Heart right ventricle (tissue), 16 donors: ENCODE measurements at regions of chr6 and their contacts with region 1.

Region 1: DNA sequence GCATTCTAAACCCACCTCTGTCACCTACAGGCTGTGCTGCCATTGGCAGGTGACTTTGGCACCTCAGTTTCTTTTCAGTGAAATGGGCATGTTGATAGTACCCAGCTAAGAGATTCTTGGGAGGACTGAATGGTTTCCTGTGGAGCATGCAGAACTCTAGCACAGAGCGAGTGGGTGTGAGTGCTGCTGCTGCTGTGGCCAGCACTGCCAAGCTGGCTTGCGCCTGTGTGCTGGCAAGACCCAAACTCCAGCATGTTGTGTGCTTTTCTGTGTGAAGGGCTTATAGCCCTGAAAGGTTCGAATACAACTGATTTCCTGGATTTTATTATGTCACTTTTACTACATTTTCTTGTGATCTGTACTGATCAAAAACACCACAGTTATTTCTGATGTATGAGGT is 78.1 kb upstream of the KIF25 start:
- DNase-seq: no peak
- ATAC-seq: no peak
- H3K4me3 ChIP-seq: no peak overlapping the region
- H3K27ac ChIP-seq: no peak overlapping the region
- H3K4me1 ChIP-seq: no peaks in the 10 kb centered on the region
- H3K27me3 ChIP-seq: no peaks in the 10 kb centered on the region
- CTCF ChIP-seq: no peak

Region 2: DNA sequence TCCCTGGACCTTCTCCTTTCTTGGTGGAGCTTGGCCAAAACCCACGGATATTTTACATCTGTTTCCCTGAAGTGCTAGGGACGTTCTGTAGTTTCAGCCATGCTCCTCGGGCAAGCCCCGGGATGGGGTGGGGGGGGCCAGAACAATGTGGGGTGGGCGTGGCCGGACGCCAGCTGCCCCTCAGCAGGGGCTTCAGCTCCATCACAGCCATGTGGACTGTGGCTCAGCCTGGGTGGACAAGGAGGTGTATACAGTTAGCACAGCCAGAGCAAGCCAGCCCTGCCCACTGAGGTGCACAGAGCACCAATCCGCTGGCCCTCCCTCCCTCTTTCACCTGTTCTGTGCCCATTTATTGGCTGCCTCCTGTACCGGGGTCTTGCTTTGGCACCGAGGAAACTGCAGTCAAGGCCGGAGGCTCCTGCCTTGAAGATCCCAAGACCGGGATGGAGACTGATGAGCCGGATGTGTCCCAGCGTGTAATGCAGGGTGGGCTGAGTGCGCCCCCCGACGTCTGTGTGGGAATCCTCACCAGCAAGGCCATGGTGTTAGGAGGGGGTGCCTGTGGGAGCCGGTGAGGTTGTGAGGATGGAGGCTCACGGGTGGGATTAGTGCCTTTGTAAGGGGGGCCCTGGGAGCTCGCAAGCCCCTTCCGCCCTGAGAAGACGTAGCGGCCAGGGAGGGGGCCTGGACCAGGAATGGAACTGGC is 131.7 kb after region 1 on chr6:
- intact Hi-C with region 1: loop called in 2 of 10 experiments (anchors 10 kb)
- DNase-seq: no peak
- ATAC-seq: no peak
- H3K4me3 ChIP-seq: no peak overlapping the region
- H3K27ac ChIP-seq: no peak overlapping the region
- H3K4me1 ChIP-seq: peaks cover 22 to 37% (median 34%) of the 10 kb centered on the region in 9 donors
- H3K27me3 ChIP-seq: no peaks in the 10 kb centered on the region
- CTCF ChIP-seq: peak in 1 of 9 donors; percentile 38

Region 3: DNA sequence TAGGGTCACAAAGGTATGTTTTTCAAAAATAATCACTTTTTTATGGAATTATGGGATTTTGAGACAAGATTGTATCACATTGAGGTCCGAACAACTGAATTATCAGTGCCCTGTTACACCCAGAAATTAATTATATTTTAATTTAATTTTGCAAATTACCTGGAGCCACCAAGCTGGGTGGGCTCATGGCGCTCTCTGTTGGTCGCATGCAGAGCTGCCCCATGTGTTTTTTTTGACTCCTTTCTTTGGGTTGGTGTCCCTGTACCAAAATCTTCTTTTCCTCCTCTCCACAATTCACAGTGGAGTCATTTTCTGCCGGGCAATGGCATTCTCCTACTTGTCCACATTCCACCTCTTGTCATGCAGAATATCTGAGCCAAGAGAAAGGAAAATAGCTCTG is 198.6 kb after region 1 on chr6:
- intact Hi-C with region 1: loop called in 1 of 10 experiments (anchors 10 kb)
- DNase-seq: no peak
- ATAC-seq: no peak
- H3K4me3 ChIP-seq: no peak overlapping the region
- H3K27ac ChIP-seq: no peak overlapping the region
- H3K4me1 ChIP-seq: peaks cover 0 to 5% (median 0%) of the 10 kb centered on the region in 9 donors
- H3K27me3 ChIP-seq: no peaks in the 10 kb centered on the region
- CTCF ChIP-seq: peak; percentile 42 to 71 (median 66)

Region 4: GRCh38 chr6:168342641-168343040 is 423.3 kb after region 1 on chr6:
- intact Hi-C with region 1: loop called in 1 of 10 experiments (anchors 10 kb)
- DNase-seq: no peak
- ATAC-seq: no peak
- H3K4me3 ChIP-seq: no peak overlapping the region
- H3K27ac ChIP-seq: no peak overlapping the region
- H3K4me1 ChIP-seq: no peaks in the 10 kb centered on the region
- H3K27me3 ChIP-seq: peaks cover 0 to 54% (median 37%) of the 10 kb centered on the region in 7 donors
- CTCF ChIP-seq: no peak

Region 5: DNA sequence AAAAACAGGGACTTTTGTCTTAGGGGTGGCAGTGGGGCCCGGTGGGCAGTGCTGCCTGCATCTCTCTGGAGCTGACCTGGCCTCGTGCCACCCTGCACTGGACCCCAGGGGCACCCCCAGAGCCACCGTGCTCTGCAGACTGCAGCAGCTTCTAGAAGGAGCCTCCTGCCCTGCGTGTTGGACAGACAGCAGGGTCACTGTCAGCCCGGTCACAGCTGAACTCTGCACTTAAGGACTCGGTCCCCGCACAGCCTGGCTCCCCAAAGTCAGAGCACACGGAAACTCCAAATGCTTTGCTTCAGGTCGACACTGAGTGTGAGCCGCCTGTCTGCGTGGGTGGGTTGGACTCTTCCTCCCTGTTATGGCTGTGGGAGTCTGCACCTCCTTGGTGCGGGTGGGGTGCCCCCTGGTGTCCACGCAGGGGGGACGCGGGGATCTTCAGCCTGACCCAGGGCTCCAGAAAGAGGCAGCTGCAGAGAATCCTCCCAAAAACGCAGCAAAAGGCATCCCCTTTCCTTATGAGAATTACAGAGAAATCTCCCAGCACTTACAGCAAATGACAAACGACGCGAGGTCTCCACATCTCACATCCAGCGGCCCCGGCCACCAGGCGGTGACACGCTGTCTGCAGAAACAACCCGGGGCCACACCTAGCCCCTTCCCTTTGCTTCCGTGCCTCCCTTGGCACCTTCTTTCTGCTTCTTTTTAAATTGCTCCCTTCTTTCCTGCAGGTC is 436.5 kb after region 1 on chr6:
- intact Hi-C with region 1: loop called in 2 of 10 experiments (anchors 10 kb)
- DNase-seq: peak; percentile 46 to 57
- ATAC-seq: peak; percentile 71 to 96 (median 89)
- H3K4me3 ChIP-seq: no peak overlapping the region
- H3K27ac ChIP-seq: no peak overlapping the region
- H3K4me1 ChIP-seq: peaks cover 0 to 8% (median 0%) of the 10 kb centered on the region in 9 donors
- H3K27me3 ChIP-seq: peaks cover 0 to 28% (median 0%) of the 10 kb centered on the region in 7 donors
- CTCF ChIP-seq: peak; percentile 39 to 79 (median 74)